ENCODE measurements at regions of chr4 and their contacts with region 1.

Region 1: DNA sequence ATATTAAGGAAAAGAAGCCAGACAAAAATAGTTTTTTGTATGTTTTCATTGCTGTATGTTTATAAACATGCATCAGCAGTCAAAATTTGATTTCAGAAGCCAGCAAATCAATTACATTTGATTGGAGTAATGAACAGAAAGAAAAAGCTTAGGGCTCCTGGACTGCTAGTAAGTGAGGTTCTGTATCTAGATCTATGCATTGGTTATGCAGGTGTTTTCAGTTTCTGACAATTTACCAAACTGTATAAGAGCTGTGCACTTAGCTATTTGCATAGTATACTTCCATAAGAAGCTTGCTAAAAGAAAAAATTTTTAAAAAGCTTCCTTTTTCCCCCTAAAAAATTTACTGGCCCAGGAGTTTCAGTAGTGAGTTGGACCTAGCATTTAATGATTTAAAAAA is 881.6 kb downstream of the PCDH7 start:
- DNase-seq: no peak
- H3K4me3 ChIP-seq: no peak overlapping the region
- H3K27ac ChIP-seq: no peak overlapping the region
- H3K4me1 ChIP-seq: no peaks in the 10 kb centered on the region
- H3K27me3 ChIP-seq: no peaks in the 10 kb centered on the region
- CTCF ChIP-seq: no peak
- EP300 ChIP-seq: no peak
- POLR2A ChIP-seq: no peak

Region 2: DNA sequence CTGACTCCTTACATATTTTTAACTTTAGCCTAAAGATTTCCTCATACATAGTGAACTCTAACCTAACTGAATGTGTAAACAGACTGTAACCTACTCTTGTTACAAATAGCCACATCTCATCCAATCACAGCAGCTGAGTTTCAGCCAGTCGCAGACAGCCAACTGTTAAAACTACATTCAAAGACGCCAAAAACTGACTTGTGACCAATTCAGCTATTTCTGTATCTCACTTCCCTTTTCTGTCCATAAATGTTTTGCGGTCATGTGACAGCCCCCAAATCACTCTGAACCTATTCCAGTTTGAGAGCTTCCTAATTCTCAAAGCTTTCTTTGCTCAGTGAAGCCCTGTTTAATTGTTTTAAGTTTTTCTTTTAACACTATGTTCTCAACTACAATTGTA is 1910.6 kb after region 1 on chr4:
- in situ Hi-C with region 1: no loop called
- intact Hi-C with region 1: loop called (anchors 10 kb)
- DNase-seq: no peak
- H3K4me3 ChIP-seq: no peak overlapping the region
- H3K27ac ChIP-seq: no peak overlapping the region
- H3K4me1 ChIP-seq: no peaks in the 10 kb centered on the region
- H3K27me3 ChIP-seq: no peaks in the 10 kb centered on the region
- CTCF ChIP-seq: no peak
- EP300 ChIP-seq: no peak
- POLR2A ChIP-seq: no peak

Measured in transverse colon (tissue), 4 donors.